ENCODE measurements at regions of chr1 and their contacts with region 1.

Region 1: DNA sequence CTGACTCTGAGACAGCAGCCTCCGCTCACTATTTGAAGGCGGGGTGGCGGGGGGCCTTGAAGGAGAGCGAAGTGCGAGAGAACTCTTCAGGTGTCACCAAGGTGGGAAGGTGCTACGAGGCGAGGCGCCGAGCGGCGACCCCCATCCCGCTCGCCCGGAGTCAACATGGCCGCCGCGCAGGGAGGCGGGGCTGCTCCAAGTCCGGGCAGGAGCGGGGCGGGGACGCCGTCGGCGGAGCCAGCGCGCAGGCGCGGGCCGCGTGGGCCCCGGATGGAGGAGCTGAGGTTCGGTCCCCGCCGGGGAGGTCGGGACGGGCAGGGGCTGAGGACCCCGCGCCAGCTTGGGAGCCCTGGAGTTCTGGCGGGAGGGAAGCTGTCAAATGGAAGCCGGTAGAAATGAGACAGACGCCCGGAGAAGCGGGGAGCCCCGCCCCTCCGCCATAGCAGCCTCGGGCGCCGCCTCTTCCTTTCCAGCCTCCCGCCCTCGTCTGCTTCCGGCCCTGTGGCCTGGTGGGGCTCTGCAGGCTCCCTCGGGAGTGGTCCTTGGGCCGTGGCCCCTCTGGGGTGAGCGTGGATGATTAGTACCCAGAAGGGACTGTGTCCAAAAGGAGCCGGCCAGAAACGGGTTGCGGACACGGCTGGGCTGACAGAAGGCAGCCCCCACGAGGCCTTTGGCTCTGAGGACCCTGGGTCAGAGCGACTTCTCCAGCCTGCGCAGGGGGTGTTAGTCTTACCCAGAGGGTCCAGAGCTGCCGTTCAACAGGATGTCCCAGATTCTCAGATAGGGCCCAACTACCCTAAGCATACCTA is at the start of gene PIGV:
- DNase-seq: peak; percentile 96
- H3K4me3 ChIP-seq: peak within 1 kb of the TSS; percentile 67 to 90 (median 72)
- H3K27ac ChIP-seq: peak within 1 kb of the TSS; percentile 90 to 98 (median 98)
- H3K4me1 ChIP-seq: peaks cover 46 to 73% (median 59%) of the 10 kb centered on the region in 4 donors
- H3K27me3 ChIP-seq: no peaks in the 10 kb centered on the region
- CTCF ChIP-seq: peak in 2 of 3 experiments; percentile 29 to 32
- EP300 ChIP-seq: no peak
- POLR2A ChIP-seq: peak; percentile 79
- total RNA-seq, gene PIGV: 11.8 to 15.2 (median 13.7) TPM

Region 2: DNA sequence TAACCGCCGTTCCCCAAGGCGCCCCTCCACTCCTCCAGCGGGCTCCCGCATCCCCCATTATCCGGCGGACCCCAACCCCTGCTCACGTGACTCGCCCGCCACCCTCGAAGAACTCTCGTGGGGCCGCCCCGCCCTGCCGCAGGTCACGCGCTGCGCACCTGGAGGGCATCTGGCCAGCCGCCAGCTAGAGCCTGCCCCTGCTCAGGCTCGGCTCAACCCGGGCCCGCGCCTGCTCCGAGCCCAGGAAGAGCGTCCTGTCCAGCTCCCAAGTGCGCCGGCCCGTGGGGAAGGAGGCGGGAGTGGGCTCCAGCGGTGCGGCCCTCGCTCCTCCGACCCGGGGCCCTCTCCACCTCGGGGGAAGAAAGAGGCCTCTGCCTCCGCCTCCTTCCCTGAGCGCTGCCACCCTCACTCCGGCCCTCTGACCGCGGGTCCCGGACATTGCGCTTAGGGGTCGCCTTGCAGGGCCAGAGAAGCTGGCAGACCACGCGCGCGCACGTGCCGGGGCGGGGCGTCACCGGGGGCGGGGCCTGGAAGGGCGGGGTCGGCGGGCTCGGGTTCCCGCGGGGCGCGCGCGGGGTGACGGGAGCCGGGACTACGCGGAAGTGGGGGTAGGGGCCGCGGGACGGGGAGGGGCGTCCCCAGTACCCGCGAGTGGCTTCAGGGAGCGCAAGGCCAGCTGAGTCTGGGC is 287.3 kb before region 1 on chr1:
- intact Hi-C with region 1: loop called (anchors 5 kb)
- DNase-seq: peak; percentile 95
- H3K4me3 ChIP-seq: peak overlapping the region; percentile 68 to 85 (median 72)
- H3K27ac ChIP-seq: peak overlapping the region; percentile 89 to 93 (median 90)
- H3K4me1 ChIP-seq: peaks cover 10 to 23% (median 21%) of the 10 kb centered on the region in 4 donors
- H3K27me3 ChIP-seq: no peaks in the 10 kb centered on the region
- CTCF ChIP-seq: peak in 1 of 3 experiments; percentile 20
- EP300 ChIP-seq: no peak
- POLR2A ChIP-seq: peak; percentile 18

Region 3: GRCh38 chr1:26602378-26602959 is 185.4 kb before region 1 on chr1:
- intact Hi-C with region 1: loop called (anchors 2 kb)
- DNase-seq: no peak
- H3K4me3 ChIP-seq: no peak overlapping the region
- H3K27ac ChIP-seq: peak overlapping the region in 3 of 4 donors; percentile 23 to 51 (median 36)
- H3K4me1 ChIP-seq: peaks cover 0 to 29% (median 22%) of the 10 kb centered on the region in 4 donors
- H3K27me3 ChIP-seq: no peaks in the 10 kb centered on the region
- CTCF ChIP-seq: peak; percentile 86 to 95 (median 87)
- EP300 ChIP-seq: no peak
- POLR2A ChIP-seq: no peak

Region 4: DNA sequence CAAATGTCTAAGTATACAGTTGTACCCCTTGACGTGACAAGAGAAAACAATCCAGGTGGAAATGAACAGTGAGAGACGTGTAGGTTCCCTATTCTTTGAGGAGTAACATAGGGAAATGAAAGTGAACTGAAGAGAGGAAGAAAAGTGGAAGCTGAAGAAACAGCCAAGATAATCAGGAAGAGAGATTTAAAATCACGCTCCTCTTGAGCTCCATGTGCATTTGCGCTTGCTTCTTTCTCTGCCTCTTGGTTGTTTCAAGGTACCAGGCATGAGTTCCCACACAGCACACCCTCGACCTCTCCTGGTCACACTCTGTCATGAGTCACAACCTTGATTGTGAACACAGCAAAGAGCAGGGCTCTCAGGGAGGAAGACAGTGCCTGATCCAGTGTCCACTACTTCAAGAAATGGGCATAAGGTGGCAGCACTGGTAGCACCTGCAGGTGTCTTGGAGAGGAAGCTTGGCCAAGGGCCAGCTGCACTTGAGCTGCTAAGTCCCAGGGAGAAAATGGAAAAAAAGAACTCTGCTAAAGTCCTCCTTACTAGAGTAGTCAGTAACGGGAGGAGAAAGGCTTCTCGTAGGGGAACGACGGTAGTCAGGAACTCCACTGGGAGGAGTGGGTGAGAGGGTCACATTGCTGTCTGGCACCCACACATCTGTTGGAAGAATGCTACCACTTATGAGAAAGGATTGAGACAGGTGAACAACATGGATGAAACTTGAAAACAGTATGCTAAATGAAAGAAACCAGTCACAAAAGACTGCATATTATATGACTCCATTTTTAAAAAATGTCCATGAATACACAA is 110.4 kb before region 1 on chr1:
- intact Hi-C with region 1: loop called (anchors 5 kb)
- DNase-seq: peak; percentile 92
- H3K4me3 ChIP-seq: peak overlapping the region in 3 of 4 donors; percentile 22 to 25 (median 23)
- H3K27ac ChIP-seq: peak overlapping the region; percentile 1 to 45 (median 30)
- H3K4me1 ChIP-seq: peaks cover 4 to 13% (median 12%) of the 10 kb centered on the region in 4 donors
- H3K27me3 ChIP-seq: no peaks in the 10 kb centered on the region
- CTCF ChIP-seq: peak; percentile 65 to 87 (median 78)
- EP300 ChIP-seq: no peak
- POLR2A ChIP-seq: no peak

Region 5: DNA sequence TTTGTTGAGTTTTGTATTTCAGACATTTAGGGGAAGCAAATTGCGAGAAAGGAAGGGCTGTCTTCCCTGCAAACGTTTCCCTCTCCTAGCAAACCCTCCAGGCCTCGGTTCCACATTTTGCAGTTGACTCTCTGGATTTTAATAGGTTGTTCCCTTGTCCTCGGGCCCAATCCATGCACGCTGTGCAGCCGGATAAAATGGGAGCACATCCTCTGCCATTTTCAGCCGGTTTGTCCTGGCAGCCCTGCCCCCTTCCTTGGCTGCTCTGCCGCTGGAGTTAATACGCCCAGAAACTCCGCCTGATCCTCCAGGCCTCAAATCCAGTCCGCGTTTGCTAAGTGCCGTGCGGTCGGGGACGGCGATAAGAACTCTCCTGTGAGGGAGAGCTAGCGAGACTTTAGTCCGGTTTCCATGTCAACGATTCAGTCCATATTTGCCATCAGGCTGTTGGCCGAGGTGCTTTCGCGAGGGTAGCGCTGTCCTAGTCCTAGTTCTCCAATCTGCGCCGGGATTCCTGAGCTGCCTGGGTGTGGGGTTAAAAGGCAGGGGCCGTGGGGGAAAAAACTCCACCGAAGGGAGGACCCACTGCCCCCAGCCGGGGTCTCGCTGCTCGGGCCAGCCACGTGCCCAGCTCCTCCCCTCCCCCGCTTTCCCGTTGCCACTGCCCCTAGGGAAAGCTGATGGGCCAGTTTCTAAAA is 95.0 kb before region 1 on chr1:
- intact Hi-C with region 1: loop called (anchors 2 kb)
- DNase-seq: peak; percentile 96
- H3K4me3 ChIP-seq: peak overlapping the region; percentile 55 to 68 (median 63)
- H3K27ac ChIP-seq: peak overlapping the region; percentile 96 to 99 (median 98)
- H3K4me1 ChIP-seq: peaks cover 24 to 41% (median 38%) of the 10 kb centered on the region in 4 donors
- H3K27me3 ChIP-seq: peaks cover 0 to 4% (median 0%) of the 10 kb centered on the region in 4 donors
- CTCF ChIP-seq: no peak
- EP300 ChIP-seq: no peak
- POLR2A ChIP-seq: peak; percentile 53

Region 6: GRCh38 chr1:26723013-26723991 is 64.6 kb before region 1 on chr1:
- intact Hi-C with region 1: loop called (anchors 10 kb)
- DNase-seq: peak; percentile 94
- H3K4me3 ChIP-seq: peak overlapping the region in 3 of 4 donors; percentile 2 to 16 (median 10)
- H3K27ac ChIP-seq: peak overlapping the region; percentile 54 to 77 (median 62)
- H3K4me1 ChIP-seq: peaks cover 83 to 100% (median 99%) of the 10 kb centered on the region in 4 donors
- H3K27me3 ChIP-seq: no peaks in the 10 kb centered on the region
- CTCF ChIP-seq: no peak
- EP300 ChIP-seq: peak; percentile 24
- POLR2A ChIP-seq: no peak

Region 7: GRCh38 chr1:26826261-26827105 is 38.6 kb after region 1 on chr1 and contains the start of gene ZDHHC18:
- intact Hi-C with region 1: no loop called
- DNase-seq: no peak
- H3K4me3 ChIP-seq: peak within 1 kb of the TSS; percentile 71 to 84 (median 81)
- H3K27ac ChIP-seq: peak within 1 kb of the TSS; percentile 73 to 81 (median 80)
- H3K4me1 ChIP-seq: peaks cover 30 to 45% (median 44%) of the 10 kb centered on the region in 4 donors
- H3K27me3 ChIP-seq: no peaks in the 10 kb centered on the region
- CTCF ChIP-seq: peak; percentile 50 to 78 (median 65)
- EP300 ChIP-seq: no peak
- POLR2A ChIP-seq: no peak
- total RNA-seq, gene ZDHHC18: 9.6 to 31.7 (median 20.8) TPM

Measured in esophagus muscularis mucosa (tissue), 4 donors.